CD14-positive monocyte (primary cell): ENCODE measurements at regions of chr13 and their contacts with region 1.

Region 1: GRCh38 chr13:46168341-46168740 is 13.6 kb downstream of the LCP1 start:
- DNase-seq: peak; percentile 84 to 97 (median 88)
- H3K4me3 ChIP-seq: peak overlapping the region; percentile 2 to 98 (median 11)
- H3K4me3 Mint-ChIP-seq: peak overlapping the region; percentile 56 to 70
- H3K27ac ChIP-seq: peak overlapping the region; percentile 90 to 95
- H3K27ac Mint-ChIP-seq: peak overlapping the region; percentile 92 to 99 (median 98)
- H3K4me1 ChIP-seq: peaks cover 96 to 99% of the 10 kb centered on the region in 2 donors
- H3K4me1 Mint-ChIP-seq: peaks cover 92% of the 10 kb centered on the region
- H3K27me3 ChIP-seq: no peaks in the 10 kb centered on the region
- H3K27me3 Mint-ChIP-seq: peaks cover 0 to 3% (median 0%) of the 10 kb centered on the region in 3 donors
- CTCF ChIP-seq: no peak

Region 2: GRCh38 chr13:46184277-46184699 is 15.9 kb after region 1 on chr13:
- intact Hi-C with region 1: loop called in 1 of 2 experiments (anchors 1 kb)
- DNase-seq: peak; percentile 61 to 73 (median 68)
- H3K4me3 ChIP-seq: peak overlapping the region; percentile 20 to 98 (median 39)
- H3K4me3 Mint-ChIP-seq: peak overlapping the region; percentile 51 to 67
- H3K27ac ChIP-seq: peak overlapping the region; percentile 53 to 95
- H3K27ac Mint-ChIP-seq: peak overlapping the region; percentile 46 to 98 (median 83)
- H3K4me1 ChIP-seq: peaks cover 33 to 38% of the 10 kb centered on the region in 2 donors
- H3K4me1 Mint-ChIP-seq: peaks cover 47% of the 10 kb centered on the region
- H3K27me3 ChIP-seq: no peaks in the 10 kb centered on the region
- H3K27me3 Mint-ChIP-seq: peaks cover 0 to 5% (median 0%) of the 10 kb centered on the region in 3 donors
- CTCF ChIP-seq: peak; percentile 79

Region 3: GRCh38 chr13:46211483-46212351 is 43.4 kb after region 1 on chr13 and contains the start of gene LRRC63:
- intact Hi-C with region 1: loop called (anchors 5 to 10 kb)
- DNase-seq: peak; percentile 68 to 72 (median 72)
- H3K4me3 ChIP-seq: peak within 1 kb of the TSS; percentile 52 to 98 (median 77)
- H3K4me3 Mint-ChIP-seq: peak within 1 kb of the TSS; percentile 87 to 98
- H3K27ac ChIP-seq: peak within 1 kb of the TSS; percentile 27 to 56
- H3K27ac Mint-ChIP-seq: peak within 1 kb of the TSS; percentile 75 to 90 (median 88)
- H3K4me1 ChIP-seq: peaks cover 8 to 17% of the 10 kb centered on the region in 2 donors
- H3K4me1 Mint-ChIP-seq: peaks cover 23% of the 10 kb centered on the region
- H3K27me3 ChIP-seq: no peaks in the 10 kb centered on the region
- H3K27me3 Mint-ChIP-seq: no peaks in the 10 kb centered on the region
- CTCF ChIP-seq: no peak
- polyA plus RNA-seq, gene LRRC63: 0.36 TPM in 1 of 3 donors, not detected in the others

Region 4: DNA sequence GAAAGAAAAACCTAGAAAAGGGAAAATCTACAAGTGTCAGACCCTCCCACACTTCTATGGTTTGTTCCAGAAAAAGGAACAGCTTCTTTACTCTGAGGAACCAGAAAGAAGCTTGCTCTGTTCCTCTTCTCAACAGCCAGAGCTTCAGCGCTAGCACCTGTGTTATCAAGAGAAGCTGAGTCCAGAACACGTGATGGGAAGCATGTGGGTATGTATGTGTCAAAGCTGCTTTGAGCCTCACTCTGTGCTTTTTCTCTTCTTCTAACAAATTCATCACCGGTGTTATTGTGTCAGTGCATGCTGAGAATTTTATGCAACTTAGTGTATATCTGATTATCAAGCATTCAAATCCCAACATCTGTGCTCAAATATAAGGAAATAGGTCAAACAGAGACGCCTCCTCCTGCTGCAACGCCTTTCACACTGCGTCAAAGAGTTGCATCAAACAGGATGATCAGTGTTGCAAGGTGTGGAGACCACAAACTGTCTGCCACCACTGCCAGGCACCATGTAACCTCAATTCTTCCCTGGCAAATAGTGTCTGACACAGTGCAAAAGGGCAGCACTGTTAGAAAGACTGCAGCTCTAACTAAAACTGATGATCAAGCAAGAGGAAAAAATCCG is 127.3 kb after region 1 on chr13:
- intact Hi-C with region 1: loop called in 1 of 2 experiments (anchors 5 kb)
- DNase-seq: peak; percentile 81 to 88 (median 84)
- H3K4me3 ChIP-seq: peak overlapping the region in 1 of 3 experiments; percentile 42
- H3K4me3 Mint-ChIP-seq: peak overlapping the region in 1 of 2 donors; percentile 73
- H3K27ac ChIP-seq: peak overlapping the region; percentile 58 to 85
- H3K27ac Mint-ChIP-seq: peak overlapping the region; percentile 91 to 96 (median 95)
- H3K4me1 ChIP-seq: peaks cover 42% of the 10 kb centered on the region in 2 donors
- H3K4me1 Mint-ChIP-seq: peaks cover 54% of the 10 kb centered on the region
- H3K27me3 ChIP-seq: no peaks in the 10 kb centered on the region
- H3K27me3 Mint-ChIP-seq: no peaks in the 10 kb centered on the region
- CTCF ChIP-seq: no peak

Region 5: DNA sequence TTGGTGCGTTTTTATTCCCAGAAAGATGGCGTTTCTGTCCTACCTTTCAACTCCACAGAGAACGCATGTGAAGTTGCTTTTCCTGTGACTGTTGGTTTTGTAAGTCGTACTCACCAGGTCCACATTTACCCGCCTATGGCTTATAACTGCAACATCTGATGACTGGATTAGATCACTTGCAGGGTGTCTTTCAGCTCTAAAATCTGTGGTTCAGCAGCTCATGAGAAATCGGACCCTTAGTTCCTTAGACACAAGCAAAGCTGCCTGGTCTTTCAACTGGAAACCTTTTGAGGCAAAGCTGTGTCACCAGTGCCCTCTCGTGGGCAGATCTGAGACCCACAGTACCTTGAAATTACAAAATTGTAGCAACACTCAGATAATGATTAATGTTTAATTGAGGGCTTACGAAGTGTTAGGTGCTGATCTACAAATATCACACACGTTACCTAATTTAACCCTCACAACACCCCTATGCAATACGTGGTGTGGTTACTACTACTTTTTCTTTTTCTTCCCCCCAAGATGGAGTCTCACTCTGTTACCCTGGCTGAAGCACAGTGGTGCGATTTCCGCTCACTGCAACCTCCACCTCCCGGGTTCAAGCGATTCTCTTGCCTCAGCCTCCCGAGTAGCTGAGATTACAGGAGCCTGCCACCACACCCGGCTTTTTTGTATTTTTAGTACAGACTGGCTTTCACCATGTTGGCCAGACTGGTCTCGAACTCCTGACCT is 153.3 kb after region 1 on chr13:
- intact Hi-C with region 1: loop called in 1 of 2 experiments (anchors 5 kb)
- DNase-seq: peak; percentile 74 to 87 (median 86)
- H3K4me3 ChIP-seq: peak overlapping the region in 2 of 3 experiments; percentile 15 to 26
- H3K4me3 Mint-ChIP-seq: peak overlapping the region in 1 of 2 donors; percentile 51
- H3K27ac ChIP-seq: peak overlapping the region in 1 of 2 donors; percentile 77
- H3K27ac Mint-ChIP-seq: peak overlapping the region; percentile 87 to 97 (median 95)
- H3K4me1 ChIP-seq: peaks cover 32 to 45% of the 10 kb centered on the region in 2 donors
- H3K4me1 Mint-ChIP-seq: peaks cover 59% of the 10 kb centered on the region
- H3K27me3 ChIP-seq: no peaks in the 10 kb centered on the region
- H3K27me3 Mint-ChIP-seq: peaks cover 0 to 3% (median 0%) of the 10 kb centered on the region in 3 donors
- CTCF ChIP-seq: peak; percentile 88